ENCODE measurements at regions of chr4 and their contacts with region 1.

Region 1: GRCh38 chr4:94036964-94037363 is 170.7 kb upstream of the SMARCAD1 start:
- DNase-seq: no peak
- ATAC-seq: no peak
- H3K4me3 ChIP-seq: no peak overlapping the region
- H3K27ac ChIP-seq: no peak overlapping the region
- H3K4me1 ChIP-seq: no peaks in the 10 kb centered on the region
- H3K27me3 ChIP-seq: no peaks in the 10 kb centered on the region

Region 2: DNA sequence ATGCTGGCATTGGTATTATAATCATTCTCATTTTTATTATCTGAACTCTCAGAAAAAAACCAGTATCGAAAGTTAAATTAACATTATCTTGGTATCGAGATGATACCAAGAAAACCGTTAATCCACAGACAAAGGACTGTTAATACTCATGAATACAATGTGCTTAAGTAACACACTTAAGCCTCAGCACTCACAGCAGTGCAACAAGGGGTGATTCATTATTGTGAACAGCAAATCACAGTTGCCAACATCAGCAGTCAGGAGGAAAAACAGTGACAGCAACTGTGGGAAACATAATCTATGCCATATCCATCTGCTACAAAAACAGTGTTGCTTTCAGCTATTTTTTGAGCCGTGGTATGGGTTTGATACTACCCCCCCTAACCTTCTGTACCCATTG is 419.4 kb before region 1 on chr4:
- intact Hi-C with region 1: no loop called
- DNase-seq: no peak
- ATAC-seq: no peak
- H3K4me3 ChIP-seq: no peak overlapping the region
- H3K27ac ChIP-seq: no peak overlapping the region
- H3K4me1 ChIP-seq: no peaks in the 10 kb centered on the region
- H3K27me3 ChIP-seq: no peaks in the 10 kb centered on the region

Region 3: DNA sequence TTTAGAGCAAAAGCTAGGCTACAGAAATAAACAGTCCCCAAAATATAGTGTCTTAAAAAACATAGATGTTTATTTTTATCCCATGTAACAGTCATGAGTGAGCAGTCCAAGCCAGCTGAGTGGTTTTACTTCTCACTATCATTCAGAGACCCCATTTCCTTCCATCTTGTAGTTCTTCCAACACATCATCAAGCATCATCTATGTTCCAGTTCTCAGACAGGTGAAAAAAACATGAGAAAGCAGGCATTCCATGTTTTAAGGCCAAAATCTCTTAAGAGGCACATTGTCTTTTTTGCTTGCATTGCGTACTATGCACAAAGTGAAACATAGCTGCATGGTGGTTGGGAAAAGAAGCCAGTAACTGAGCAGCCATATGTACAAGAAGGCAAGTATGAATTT is 79.8 kb before region 1 on chr4:
- intact Hi-C with region 1: loop called in 1 of 4 experiments (anchors 5 kb)
- DNase-seq: no peak
- ATAC-seq: no peak
- H3K4me3 ChIP-seq: no peak overlapping the region
- H3K27ac ChIP-seq: no peak overlapping the region
- H3K4me1 ChIP-seq: no peaks in the 10 kb centered on the region
- H3K27me3 ChIP-seq: no peaks in the 10 kb centered on the region

Region 4: GRCh38 chr4:94635177-94635576 is 598.2 kb after region 1 on chr4:
- intact Hi-C with region 1: no loop called
- DNase-seq: no peak
- ATAC-seq: no peak
- H3K4me3 ChIP-seq: no peak overlapping the region
- H3K27ac ChIP-seq: no peak overlapping the region
- H3K4me1 ChIP-seq: no peaks in the 10 kb centered on the region
- H3K27me3 ChIP-seq: no peaks in the 10 kb centered on the region